ENCODE measurements at regions of chr2 and their contacts with region 1.

Region 1: GRCh38 chr2:149388120-149388798 is 57.9 kb downstream of the LYPD6 start:
- DNase-seq: peak in 1 of 2 experiments; percentile 13
- H3K4me3 ChIP-seq: no peak overlapping the region
- H3K27ac ChIP-seq: no peak overlapping the region
- H3K4me1 ChIP-seq: peaks cover 0 to 9% (median 4%) of the 10 kb centered on the region in 4 experiments; a peak in 4 of 7 replicates
- H3K27me3 ChIP-seq: no peaks in the 10 kb centered on the region
- CTCF ChIP-seq: peak; percentile 36 to 45 (median 39); a peak in 3 of 4 replicates
- EP300 ChIP-seq: no peak
- POLR2A ChIP-seq: no peak
- RAD21 ChIP-seq: peak; percentile 21 to 43; a peak in 3 of 4 replicates

Region 2: DNA sequence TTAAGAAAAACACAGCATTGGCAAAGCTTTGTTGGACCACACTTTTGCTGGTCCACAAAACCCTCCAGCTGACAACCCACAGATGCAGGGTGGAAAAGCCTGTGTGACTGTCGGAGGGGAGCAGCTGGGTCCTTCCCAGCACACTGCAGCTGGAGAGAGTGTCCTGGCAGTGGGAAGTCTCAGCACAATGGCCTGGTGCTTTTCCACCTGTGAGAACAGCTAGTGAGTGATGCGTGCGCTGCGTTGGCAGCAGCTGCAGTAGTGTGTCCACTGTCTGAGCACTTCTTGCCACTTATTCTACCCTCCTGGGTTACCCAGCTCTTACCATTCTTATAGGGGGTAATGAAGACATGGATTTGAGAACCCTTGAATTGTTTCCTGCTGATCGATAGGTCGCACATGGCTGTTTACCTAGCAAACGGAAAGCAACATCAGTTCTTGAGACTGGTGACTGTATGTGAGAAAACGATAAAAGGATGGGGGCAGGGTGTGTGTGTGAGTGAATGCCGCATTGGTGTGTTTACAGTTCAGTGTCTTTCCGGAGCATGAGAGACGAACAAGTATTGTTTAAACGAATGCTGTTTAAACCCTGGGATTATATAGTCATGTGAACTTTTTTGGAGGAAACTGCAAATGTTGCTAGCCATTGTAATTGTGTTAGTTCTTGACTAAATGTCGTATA is 11.8 kb after region 1 on chr2:
- CTCF ChIA-PET with region 1: interaction called, 10 read pairs
- POLR2A ChIA-PET with region 1: no interaction called
- DNase-seq: no peak
- H3K4me3 ChIP-seq: no peak overlapping the region
- H3K27ac ChIP-seq: no peak overlapping the region
- H3K4me1 ChIP-seq: peaks cover 0 to 6% (median 2%) of the 10 kb centered on the region in 4 experiments; a peak in 2 of 7 replicates
- H3K27me3 ChIP-seq: no peaks in the 10 kb centered on the region
- CTCF ChIP-seq: no peak
- EP300 ChIP-seq: no peak
- POLR2A ChIP-seq: no peak
- RAD21 ChIP-seq: no peak

Region 3: GRCh38 chr2:149410701-149411484 is 22.6 kb after region 1 on chr2:
- CTCF ChIA-PET with region 1: interaction called, 11 read pairs
- POLR2A ChIA-PET with region 1: no interaction called
- DNase-seq: no peak
- H3K4me3 ChIP-seq: no peak overlapping the region
- H3K27ac ChIP-seq: no peak overlapping the region
- H3K4me1 ChIP-seq: no peaks in the 10 kb centered on the region
- H3K27me3 ChIP-seq: no peaks in the 10 kb centered on the region
- CTCF ChIP-seq: no peak
- EP300 ChIP-seq: no peak
- POLR2A ChIP-seq: no peak
- RAD21 ChIP-seq: no peak